ENCODE measurements at regions of chr19 and their contacts with region 1.

Region 1: GRCh38 chr19:18932216-18932841 is 8.7 kb downstream of the HOMER3 start:
- DNase-seq: peak; percentile 8
- ATAC-seq: peak; percentile 90
- H3K4me3 ChIP-seq: no peak overlapping the region
- H3K27ac ChIP-seq: no peak overlapping the region
- H3K4me1 ChIP-seq: no peaks in the 10 kb centered on the region
- H3K27me3 ChIP-seq: no peaks in the 10 kb centered on the region
- CTCF ChIP-seq: no peak

Region 2: DNA sequence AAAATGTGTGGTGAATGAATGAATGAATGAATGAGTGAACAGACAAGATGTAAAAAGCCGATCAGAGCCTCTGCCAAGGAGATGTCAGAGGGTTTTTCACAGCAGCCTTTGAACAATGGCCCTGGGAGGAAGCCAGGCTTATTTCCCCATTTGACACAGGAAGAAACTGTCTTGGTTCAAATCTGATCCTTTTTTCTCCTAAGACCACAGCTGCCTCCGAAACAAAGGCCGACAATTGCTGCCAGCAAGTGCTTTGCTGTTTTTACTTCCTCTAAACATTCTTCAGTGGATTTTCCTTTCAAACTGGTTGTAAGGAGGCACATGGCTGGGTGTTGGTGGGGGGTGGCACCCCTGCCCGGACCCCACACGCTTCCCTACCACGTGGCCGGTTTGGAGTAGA is 52.9 kb after region 1 on chr19:
- CTCF ChIA-PET with region 1: no interaction called
- POLR2A ChIA-PET with region 1: no interaction called
- in situ Hi-C with region 1: no loop called
- intact Hi-C with region 1: loop called (anchors 10 kb)
- DNase-seq: no peak
- ATAC-seq: no peak
- H3K4me3 ChIP-seq: no peak overlapping the region
- H3K27ac ChIP-seq: no peak overlapping the region; the same call in 1 of the 2 replicates
- H3K4me1 ChIP-seq: no peaks in the 10 kb centered on the region; the same call in 1 of the 2 replicates
- H3K27me3 ChIP-seq: no peaks in the 10 kb centered on the region
- CTCF ChIP-seq: no peak

Region 3: DNA sequence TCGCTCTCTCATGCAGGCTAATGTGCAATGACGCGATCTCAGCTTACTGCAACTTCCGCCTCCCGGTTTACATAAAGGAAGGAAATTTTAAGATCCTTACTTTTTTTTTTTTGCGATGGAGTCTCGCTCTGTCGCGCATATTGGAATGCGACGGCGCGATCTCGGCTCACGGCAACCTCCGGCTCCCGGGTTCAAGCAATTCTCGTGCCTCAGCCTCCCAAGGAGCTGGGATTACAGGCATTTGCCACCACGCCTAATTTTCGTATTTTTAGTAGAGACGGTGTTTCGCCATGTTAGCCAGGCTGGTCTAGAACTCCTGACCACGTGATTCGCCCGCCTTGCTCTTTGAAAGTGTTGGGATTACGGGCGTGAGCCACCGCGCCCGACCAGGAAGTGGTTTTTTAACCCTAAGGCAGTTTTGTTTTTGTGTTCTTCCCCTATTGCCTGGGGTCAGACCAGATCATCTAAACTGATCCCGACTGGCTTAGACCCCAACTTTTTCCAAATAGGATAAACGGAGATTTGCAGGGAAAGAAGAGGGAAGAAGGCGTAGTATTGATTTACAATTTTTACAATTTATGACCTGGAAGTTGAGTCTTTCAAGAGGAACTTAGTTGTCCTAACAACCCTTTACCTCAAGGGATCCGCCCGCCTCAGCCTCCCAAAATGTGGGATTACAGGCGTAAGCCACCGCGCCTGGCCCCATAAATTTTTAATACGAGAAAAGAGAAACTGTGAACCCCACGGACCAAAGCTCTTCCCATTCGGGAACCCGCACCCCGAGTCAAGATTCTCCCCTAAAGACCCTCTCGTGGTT is 1491.3 kb after region 1 on chr19:
- CTCF ChIA-PET with region 1: no interaction called
- POLR2A ChIA-PET with region 1: interaction called, 14 read pairs
- in situ Hi-C with region 1: no loop called
- intact Hi-C with region 1: no loop called
- DNase-seq: peak; percentile 67
- ATAC-seq: peak; percentile 75
- H3K4me3 ChIP-seq: peak overlapping the region; percentile 59 to 98
- H3K27ac ChIP-seq: peak overlapping the region; percentile 96
- H3K4me1 ChIP-seq: no peaks in the 10 kb centered on the region
- H3K27me3 ChIP-seq: no peaks in the 10 kb centered on the region
- CTCF ChIP-seq: no peak

Measured in Panc1 (cell line).